Activated T-helper 2 cell treated with anti-CD3 and anti-CD28 coated beads, Interferon-gamma antibody, Interleukin-2, Interleukin-4, amounts not matched to agents 10 μg/mL and 5 μg/mL and 100 μg/mL, durations not matched to agents 14 hours and 24 hours and 36 hours (primary cell): ENCODE measurements at regions of chr2 and their contacts with region 1.

Region 1: DNA sequence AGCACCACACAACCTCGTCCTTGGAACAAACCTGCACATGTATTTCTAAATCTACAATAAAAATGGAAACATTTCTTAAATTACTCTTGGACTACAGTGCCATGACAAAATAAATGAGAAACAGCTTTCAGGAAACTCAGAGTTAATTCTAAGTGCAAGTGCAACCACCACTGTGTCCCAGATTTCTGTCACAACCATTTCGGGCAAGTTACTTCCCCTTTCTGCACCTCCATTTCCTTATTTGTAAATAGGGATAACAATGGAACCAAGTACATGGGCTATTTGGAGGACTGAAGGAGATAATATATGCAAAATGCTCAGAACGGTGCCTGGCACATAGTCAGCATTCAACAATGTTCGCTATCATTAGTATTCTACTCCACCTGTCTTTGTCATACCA is 93.2 kb downstream of the CACNB4 start:
- DNase-seq: no peak
- H3K4me3 Mint-ChIP-seq: no peak overlapping the region
- H3K27ac Mint-ChIP-seq: no peak overlapping the region
- H3K4me1 Mint-ChIP-seq: peaks cover 5% of the 10 kb centered on the region
- H3K27me3 Mint-ChIP-seq: peaks cover 5% of the 10 kb centered on the region

Region 2: GRCh38 chr2:152025678-152026287 is 20.2 kb after region 1 on chr2:
- intact Hi-C with region 1: loop called (anchors 2 kb)
- DNase-seq: peak; percentile 69
- H3K4me3 Mint-ChIP-seq: peak overlapping the region; percentile 84
- H3K27ac Mint-ChIP-seq: no peak overlapping the region
- H3K4me1 Mint-ChIP-seq: peaks cover 8% of the 10 kb centered on the region
- H3K27me3 Mint-ChIP-seq: peaks cover 11% of the 10 kb centered on the region

Region 3: DNA sequence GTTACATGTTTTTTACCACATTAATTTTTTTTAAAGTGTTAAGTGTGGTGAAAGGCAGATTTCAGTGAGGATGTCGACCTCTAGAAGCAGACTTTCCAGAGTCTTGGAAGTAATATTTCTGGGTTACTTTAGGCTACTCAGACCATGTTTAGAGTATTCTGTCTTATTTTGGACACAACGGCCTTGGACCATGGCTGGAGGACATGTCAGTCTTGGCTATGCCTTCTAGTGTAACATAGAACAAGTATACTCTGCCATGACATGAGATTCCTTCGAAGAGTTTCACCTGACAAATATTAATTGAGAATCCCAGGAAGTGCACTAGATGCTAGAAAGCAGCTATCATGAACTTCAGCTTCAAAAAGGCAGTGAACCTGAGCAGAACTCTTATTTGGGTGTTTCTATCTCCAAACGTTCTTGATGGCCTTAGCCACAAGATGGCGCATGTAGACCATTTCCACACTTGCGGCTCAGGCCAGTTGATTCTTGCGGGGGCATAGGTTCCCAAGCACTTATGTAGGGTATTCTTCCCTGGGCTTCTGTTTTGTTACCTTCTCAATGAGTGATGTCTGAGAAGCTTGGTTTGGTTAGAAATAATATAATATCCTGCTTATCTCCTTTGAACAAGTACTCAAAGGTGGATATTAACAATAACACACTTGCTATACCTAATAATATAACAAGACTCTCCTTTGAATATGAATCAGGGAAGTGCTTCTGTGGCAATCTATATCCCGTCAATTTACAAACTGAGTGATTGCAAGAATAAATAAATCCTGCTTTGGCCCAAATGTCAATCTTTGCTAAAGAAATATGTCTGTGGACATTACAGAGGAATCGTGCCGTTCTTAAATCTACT is 31.2 kb after region 1 on chr2:
- intact Hi-C with region 1: no loop called
- DNase-seq: peak; percentile 22
- H3K4me3 Mint-ChIP-seq: no peak overlapping the region
- H3K27ac Mint-ChIP-seq: no peak overlapping the region
- H3K4me1 Mint-ChIP-seq: no peaks in the 10 kb centered on the region
- H3K27me3 Mint-ChIP-seq: peaks cover 5% of the 10 kb centered on the region